OCI-LY7 (cell line): ENCODE measurements at regions of chr9 and their contacts with region 1.

Region 1: GRCh38 chr9:20980832-20981455 is 50.5 kb downstream of the HACD4 start:
- DNase-seq: peak; percentile 45
- H3K4me3 ChIP-seq: peak overlapping the region; percentile 38
- H3K27ac ChIP-seq: peak overlapping the region; percentile 54
- H3K4me1 ChIP-seq: peaks cover 21% of the 10 kb centered on the region
- CTCF ChIP-seq: no peak

Region 2: GRCh38 chr9:20997503-20998076 is 16.6 kb after region 1 on chr9:
- CTCF ChIA-PET with region 1: no interaction called
- POLR2A ChIA-PET with region 1: interaction called, 19 read pairs
- intact Hi-C with region 1: no loop called
- DNase-seq: peak; percentile 48
- H3K4me3 ChIP-seq: no peak overlapping the region
- H3K27ac ChIP-seq: peak overlapping the region; percentile 35
- H3K4me1 ChIP-seq: peaks cover 36% of the 10 kb centered on the region
- CTCF ChIP-seq: no peak

Region 3: GRCh38 chr9:21096172-21096900 is 115.4 kb after region 1 on chr9:
- CTCF ChIA-PET with region 1: no interaction called
- POLR2A ChIA-PET with region 1: no interaction called
- intact Hi-C with region 1: loop called (anchors 5 kb)
- DNase-seq: peak; percentile 47
- H3K4me3 ChIP-seq: peak overlapping the region; percentile 29
- H3K27ac ChIP-seq: no peak overlapping the region
- H3K4me1 ChIP-seq: peaks cover 20% of the 10 kb centered on the region
- CTCF ChIP-seq: no peak